OCI-LY7 (cell line): ENCODE measurements at regions of chr5 and their contacts with region 1.

Region 1: DNA sequence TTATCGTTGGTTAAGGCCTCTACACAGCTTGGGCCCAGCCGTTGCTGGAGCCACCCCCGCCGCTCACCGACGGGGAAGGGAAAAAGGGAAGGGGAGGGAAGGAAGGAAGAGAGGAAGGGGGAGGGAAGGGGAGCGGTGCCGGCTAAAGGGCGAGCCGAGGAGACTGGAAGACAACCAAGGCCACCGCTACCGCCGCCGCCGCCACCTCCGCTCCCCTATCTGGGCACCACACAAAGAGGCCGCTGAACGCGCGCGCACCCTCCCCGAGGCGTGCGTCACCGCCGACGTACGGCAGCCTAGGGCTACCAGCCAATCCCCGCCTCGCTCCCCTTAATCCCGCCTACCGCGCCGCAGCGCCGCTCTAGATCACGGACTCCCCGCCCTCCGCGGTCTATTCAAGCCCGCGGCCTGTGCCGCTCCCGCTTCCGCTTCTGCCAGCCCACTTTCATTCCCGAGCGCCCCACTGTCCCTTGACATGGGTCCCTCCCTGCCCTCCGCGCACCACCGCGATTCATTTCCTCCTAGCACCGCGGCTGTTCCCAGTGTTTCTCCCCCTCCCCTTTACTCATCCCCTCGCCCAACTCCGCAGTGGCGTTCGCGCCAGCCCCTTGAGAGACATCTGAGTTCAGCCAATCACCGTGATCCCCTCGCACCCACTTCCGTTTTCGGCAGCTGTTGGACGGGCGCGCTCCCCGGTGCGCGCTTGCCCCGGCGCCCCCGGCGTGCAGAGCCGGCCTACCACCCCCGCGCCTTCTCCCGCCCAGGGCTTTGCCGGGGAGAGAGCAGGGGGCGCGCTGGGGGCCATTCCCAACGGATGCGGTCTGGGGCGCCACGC is at the start of gene HNRNPA0:
- DNase-seq: peak; percentile 98
- H3K4me3 ChIP-seq: peak within 1 kb of the TSS; percentile 99
- H3K27ac ChIP-seq: peak within 1 kb of the TSS; percentile 72
- H3K4me1 ChIP-seq: peaks cover 23% of the 10 kb centered on the region
- CTCF ChIP-seq: no peak
- total RNA-seq, gene HNRNPA0: 20.6 and 25.8 TPM in 2 replicates

Region 2: GRCh38 chr5:137507150-137507549 is 247.2 kb before region 1 on chr5:
- CTCF ChIA-PET with region 1: no interaction called
- POLR2A ChIA-PET with region 1: no interaction called
- intact Hi-C with region 1: no loop called
- DNase-seq: no peak
- H3K4me3 ChIP-seq: no peak overlapping the region
- H3K27ac ChIP-seq: no peak overlapping the region
- H3K4me1 ChIP-seq: no peaks in the 10 kb centered on the region
- CTCF ChIP-seq: no peak

Region 3: GRCh38 chr5:138035605-138036537 is 281.5 kb after region 1 on chr5:
- CTCF ChIA-PET with region 1: no interaction called
- POLR2A ChIA-PET with region 1: interaction called, 3 read pairs
- intact Hi-C with region 1: loop called (anchors 2 kb)
- DNase-seq: peak; percentile 90
- H3K4me3 ChIP-seq: no peak overlapping the region
- H3K27ac ChIP-seq: no peak overlapping the region
- H3K4me1 ChIP-seq: peaks cover 38% of the 10 kb centered on the region
- CTCF ChIP-seq: peak; percentile 99